Left cardiac atrium (tissue), 4 donors: ENCODE measurements at regions of chr2 and their contacts with region 1.

Region 1: DNA sequence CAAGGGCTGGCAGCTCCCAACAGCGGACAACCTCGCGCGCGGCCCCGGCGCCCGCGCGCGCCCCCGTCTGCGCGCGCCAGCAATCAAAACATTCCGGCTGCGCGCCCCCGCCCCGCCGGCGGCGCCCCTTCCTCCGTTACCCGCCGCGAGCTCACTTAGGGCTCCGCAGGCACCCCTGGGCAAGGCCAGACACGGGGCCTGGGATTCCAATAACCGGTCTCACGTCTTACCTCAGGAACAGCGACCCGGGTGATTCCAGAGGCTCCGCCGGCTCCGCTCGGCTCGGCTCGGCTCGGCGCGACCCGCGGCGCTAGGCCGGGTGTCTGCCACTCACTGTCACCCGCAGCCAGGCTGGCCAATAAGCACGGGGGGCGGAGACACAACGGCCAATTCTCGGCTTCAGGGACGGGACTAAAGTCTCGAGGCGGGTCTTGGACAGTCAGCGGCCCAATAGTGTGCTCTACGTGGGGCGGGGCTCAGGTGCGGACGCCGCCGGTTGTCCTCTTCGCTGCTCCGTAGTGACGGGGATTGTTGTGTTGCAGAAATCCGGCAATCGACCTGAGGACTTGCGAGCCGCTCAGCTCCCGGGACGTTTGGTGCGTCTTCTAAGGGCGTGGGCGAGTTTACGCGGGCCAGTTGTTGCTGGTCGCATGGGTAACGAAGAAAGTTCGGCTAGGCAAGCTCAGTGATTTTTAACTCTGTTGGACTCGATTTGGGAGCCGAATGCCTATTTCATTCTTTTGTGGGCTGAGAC is at the starts of genes ANKZF1 and ATG9A:
- DNase-seq: peak; percentile 99
- ATAC-seq: peak; percentile 99
- total RNA-seq, gene ANKZF1: 16.0 to 20.3 TPM
- total RNA-seq, gene ATG9A: 69.0 to 74.4 TPM

Region 2: GRCh38 chr2:219245148-219245898 is 15.8 kb after region 1 on chr2 and contains the starts of genes GLB1L and STK16:
- intact Hi-C with region 1: loop called in 1 of 2 experiments (anchors 2 kb)
- DNase-seq: peak; percentile 96
- ATAC-seq: peak; percentile 93 to 94
- total RNA-seq, gene GLB1L: 4.7 to 4.9 TPM
- total RNA-seq, gene STK16: 15.6 to 17.4 TPM